Dendritic cell treated with granulocyte-macrophage colony-stimulating factor and Interleukin-4, amounts not matched to agents 40 ng/mL and 50 ng/mL, for 4 days (primary cell): ENCODE measurements at regions of chr14 and their contacts with region 1.

Region 1: GRCh38 chr14:89178802-89179535 is 238.1 kb downstream of the FOXN3 start:
- H3K4me3 Mint-ChIP-seq: no peak overlapping the region
- H3K27ac Mint-ChIP-seq: no peak overlapping the region
- H3K4me1 Mint-ChIP-seq: peaks cover 15% of the 10 kb centered on the region
- H3K27me3 Mint-ChIP-seq: no peaks in the 10 kb centered on the region

Region 2: DNA sequence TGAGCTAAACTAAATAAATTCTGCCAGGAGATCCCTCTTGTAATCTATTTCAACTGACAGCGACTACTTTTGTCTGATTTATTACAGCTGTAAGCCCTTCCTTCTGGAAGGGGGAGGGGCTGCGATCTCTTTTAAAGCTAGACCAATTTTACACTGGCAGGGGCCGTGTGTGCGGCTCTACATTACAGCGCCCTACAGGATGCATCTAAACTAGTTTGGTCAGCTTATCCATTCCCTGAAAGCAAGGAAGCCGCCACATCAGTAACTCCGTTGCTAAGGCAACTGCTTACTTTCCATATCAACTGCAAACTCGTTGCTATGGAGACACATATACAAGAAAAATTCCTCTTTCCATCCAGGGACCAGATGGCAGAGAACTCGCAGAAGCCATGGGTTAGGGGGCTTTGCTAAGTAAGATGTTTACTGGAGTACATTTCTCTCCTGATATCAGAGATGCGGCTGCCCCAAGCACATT is 220.7 kb after region 1 on chr14:
- intact Hi-C with region 1: loop called (anchors 10 kb)
- H3K4me3 Mint-ChIP-seq: no peak overlapping the region
- H3K27ac Mint-ChIP-seq: no peak overlapping the region
- H3K4me1 Mint-ChIP-seq: peaks cover 81% of the 10 kb centered on the region
- H3K27me3 Mint-ChIP-seq: no peaks in the 10 kb centered on the region

Region 3: GRCh38 chr14:89767861-89768268 is 588.9 kb after region 1 on chr14:
- intact Hi-C with region 1: loop called (anchors 5 kb)
- H3K4me3 Mint-ChIP-seq: no peak overlapping the region
- H3K27ac Mint-ChIP-seq: peak overlapping the region; percentile 47
- H3K4me1 Mint-ChIP-seq: peaks cover 32% of the 10 kb centered on the region
- H3K27me3 Mint-ChIP-seq: peaks cover 6% of the 10 kb centered on the region